ENCODE measurements at regions of chrX and their contacts with region 1.

Region 1: GRCh38 chrX:77693594-77693993 is 92.4 kb downstream of the ATRX start:
- DNase-seq: no peak
- ATAC-seq: no peak
- H3K4me3 ChIP-seq: no peak overlapping the region
- H3K4me3 Mint-ChIP-seq: no peak overlapping the region
- H3K27ac ChIP-seq: no peak overlapping the region
- H3K27ac Mint-ChIP-seq: peak overlapping the region in 1 of 9 donors; percentile 25
- H3K4me1 ChIP-seq: no peaks in the 10 kb centered on the region
- H3K4me1 Mint-ChIP-seq: peaks cover 0 to 10% (median 5%) of the 10 kb centered on the region in 7 donors
- H3K27me3 ChIP-seq: no peaks in the 10 kb centered on the region
- H3K27me3 Mint-ChIP-seq: no peaks in the 10 kb centered on the region

Region 2: GRCh38 chrX:77572322-77572721 is 121.3 kb before region 1 on chrX:
- CTCF ChIA-PET with region 1: no interaction called
- POLR2A ChIA-PET with region 1: no interaction called
- intact Hi-C with region 1: loop called in 1 of 2 experiments (anchors 10 kb)
- DNase-seq: no peak
- ATAC-seq: no peak
- H3K4me3 ChIP-seq: no peak overlapping the region
- H3K4me3 Mint-ChIP-seq: no peak overlapping the region
- H3K27ac ChIP-seq: no peak overlapping the region
- H3K27ac Mint-ChIP-seq: no peak overlapping the region
- H3K4me1 ChIP-seq: no peaks in the 10 kb centered on the region
- H3K4me1 Mint-ChIP-seq: peaks cover 0 to 19% (median 3%) of the 10 kb centered on the region in 7 donors
- H3K27me3 ChIP-seq: no peaks in the 10 kb centered on the region
- H3K27me3 Mint-ChIP-seq: no peaks in the 10 kb centered on the region

Region 3: DNA sequence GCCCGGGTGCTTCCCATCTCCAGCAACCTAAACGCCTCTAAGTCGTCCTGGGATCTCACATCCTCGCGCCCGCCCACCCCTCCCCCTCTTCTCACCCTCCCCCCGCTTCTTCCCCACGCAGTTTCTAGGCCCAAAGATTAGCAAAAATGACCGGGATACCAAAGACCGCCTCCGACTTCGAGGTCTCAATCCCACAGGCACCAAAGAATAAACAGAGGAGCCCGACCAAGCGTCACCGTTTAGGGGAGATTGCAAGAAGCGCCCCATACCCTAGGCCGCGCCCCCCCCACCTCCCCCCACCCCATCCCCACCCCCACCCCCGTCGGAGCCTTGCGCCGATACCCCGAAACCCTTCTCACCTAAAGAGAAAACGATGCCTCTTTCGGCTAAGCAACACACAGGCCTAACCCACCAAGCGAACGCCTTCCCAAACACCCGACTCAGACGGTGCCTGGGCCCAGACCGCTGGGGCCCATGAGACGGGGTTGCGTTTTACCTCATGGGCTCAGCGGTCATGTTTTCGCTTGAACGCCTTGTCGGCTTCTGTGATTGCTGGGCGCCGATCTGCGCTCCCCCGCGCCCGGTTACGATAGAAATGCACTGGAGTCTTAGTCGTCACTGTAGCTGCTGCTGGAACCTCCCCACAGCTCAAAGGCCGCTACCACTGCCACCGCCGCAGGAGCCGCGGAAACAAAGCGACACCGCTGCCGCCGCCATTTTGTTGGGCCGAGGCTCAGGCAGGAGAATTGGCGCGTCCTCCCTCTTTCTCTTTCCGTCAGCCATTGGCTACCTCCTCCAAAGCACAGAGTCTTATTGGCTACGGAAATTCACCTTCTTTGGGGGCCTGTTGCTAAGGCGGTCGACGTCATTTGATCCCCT is 92.1 kb after region 1 on chrX and contains the start of gene ATRX:
- CTCF ChIA-PET with region 1: no interaction called
- POLR2A ChIA-PET with region 1: no interaction called
- intact Hi-C with region 1: loop called in 1 of 2 experiments (anchors 10 kb)
- DNase-seq: peak; percentile 55 to 83 (median 79)
- ATAC-seq: peak; percentile 94
- H3K4me3 ChIP-seq: peak within 1 kb of the TSS; percentile 86
- H3K4me3 Mint-ChIP-seq: peak within 1 kb of the TSS; percentile 98 to 100 (median 100)
- H3K27ac ChIP-seq: peak within 1 kb of the TSS; percentile 93
- H3K27ac Mint-ChIP-seq: peak within 1 kb of the TSS; percentile 99 to 100 (median 100)
- H3K4me1 ChIP-seq: peaks cover 7 to 8% of the 10 kb centered on the region in 2 donors
- H3K4me1 Mint-ChIP-seq: peaks cover 0 to 46% (median 32%) of the 10 kb centered on the region in 7 donors
- H3K27me3 ChIP-seq: no peaks in the 10 kb centered on the region
- H3K27me3 Mint-ChIP-seq: no peaks in the 10 kb centered on the region
- total RNA-seq, gene ATRX: 90.1 to 126 (median 114) TPM